Common myeloid progenitor, CD34-positive (primary cell): ENCODE measurements at regions of chr21 and their contacts with region 1.

Region 1: GRCh38 chr21:37220981-37221664 is 46.0 kb downstream of the VPS26C start:
- DNase-seq: peak; percentile 93 to 96 (median 95)
- H3K4me3 ChIP-seq: peak overlapping the region; percentile 28 to 94 (median 78)
- H3K27ac ChIP-seq: peak overlapping the region in 1 of 2 experiments; percentile 66
- H3K4me1 ChIP-seq: peaks cover 4 to 62% (median 54%) of the 10 kb centered on the region in 4 experiments
- H3K27me3 ChIP-seq: no peaks in the 10 kb centered on the region

Region 2: GRCh38 chr21:37208056-37208721 is 12.9 kb before region 1 on chr21:
- CTCF ChIA-PET with region 1: interaction called, 16 read pairs
- POLR2A ChIA-PET with region 1: no interaction called
- DNase-seq: peak; percentile 70 to 93 (median 88)
- H3K4me3 ChIP-seq: peak overlapping the region in 4 of 7 experiments; percentile 7 to 61 (median 40)
- H3K27ac ChIP-seq: peak overlapping the region in 1 of 2 experiments; percentile 65
- H3K4me1 ChIP-seq: peaks cover 0 to 26% (median 14%) of the 10 kb centered on the region in 4 experiments
- H3K27me3 ChIP-seq: no peaks in the 10 kb centered on the region